Dorsolateral prefrontal cortex (tissue), 120 donors: ENCODE measurements at regions of chr7 and their contacts with region 1.

Region 1: GRCh38 chr7:37284805-37285231 is 163.8 kb downstream of the ELMO1 start:
- DNase-seq: peak in 9 of 10 donors; percentile 48 to 82 (median 73)
- H3K4me3 ChIP-seq: no peak overlapping the region
- H3K27ac ChIP-seq: peak overlapping the region; percentile 74 to 100 (median 98)
- H3K27me3 ChIP-seq: no peaks in the 10 kb centered on the region
- CTCF ChIP-seq: peak; percentile 64 to 97 (median 80)

Region 2: GRCh38 chr7:37208528-37208927 is 76.3 kb before region 1 on chr7:
- intact Hi-C with region 1: loop called in 1 of 2 experiments (anchors 5 kb)
- DNase-seq: peak in 9 of 10 donors; percentile 24 to 76 (median 66)
- H3K4me3 ChIP-seq: peak overlapping the region in 1 of 59 donors; percentile 4
- H3K27ac ChIP-seq: peak overlapping the region; percentile 2 to 95 (median 84)
- H3K27me3 ChIP-seq: no peaks in the 10 kb centered on the region
- CTCF ChIP-seq: peak; percentile 47 to 88 (median 75)

Region 3: GRCh38 chr7:37480041-37481031 is 195.5 kb after region 1 on chr7:
- intact Hi-C with region 1: loop called in 1 of 2 experiments (anchors 5 kb)
- DNase-seq: peak in 1 of 10 donors; percentile 28
- H3K4me3 ChIP-seq: peak overlapping the region in 6 of 59 donors; percentile 0 to 15 (median 10)
- H3K27ac ChIP-seq: peak overlapping the region in 58 of 59 donors; percentile 34 to 98 (median 90)
- H3K27me3 ChIP-seq: no peaks in the 10 kb centered on the region
- CTCF ChIP-seq: no peak

Region 4: GRCh38 chr7:37495574-37496184 is 210.9 kb after region 1 on chr7:
- intact Hi-C with region 1: loop called in 1 of 2 experiments (anchors 10 kb)
- DNase-seq: no peak
- H3K4me3 ChIP-seq: no peak overlapping the region
- H3K27ac ChIP-seq: peak overlapping the region in 39 of 59 donors; percentile 2 to 96 (median 87)
- H3K27me3 ChIP-seq: no peaks in the 10 kb centered on the region
- CTCF ChIP-seq: peak; percentile 60 to 90 (median 77)

Region 5: GRCh38 chr7:37504801-37505200 is 220.0 kb after region 1 on chr7:
- intact Hi-C with region 1: loop called in 1 of 2 experiments (anchors 5 kb)
- DNase-seq: no peak
- H3K4me3 ChIP-seq: no peak overlapping the region
- H3K27ac ChIP-seq: peak overlapping the region in 55 of 59 donors; percentile 6 to 87 (median 68)
- H3K27me3 ChIP-seq: peaks cover 0 to 7% (median 0%) of the 10 kb centered on the region in 45 donors
- CTCF ChIP-seq: no peak